GM10248 (cell line): ENCODE measurements at regions of chr2 and their contacts with region 1.

Region 1: GRCh38 chr2:136572335-136572734 is 193.0 kb upstream of the THSD7B start:
- DNase-seq: no peak
- CTCF ChIP-seq: no peak

Region 2: DNA sequence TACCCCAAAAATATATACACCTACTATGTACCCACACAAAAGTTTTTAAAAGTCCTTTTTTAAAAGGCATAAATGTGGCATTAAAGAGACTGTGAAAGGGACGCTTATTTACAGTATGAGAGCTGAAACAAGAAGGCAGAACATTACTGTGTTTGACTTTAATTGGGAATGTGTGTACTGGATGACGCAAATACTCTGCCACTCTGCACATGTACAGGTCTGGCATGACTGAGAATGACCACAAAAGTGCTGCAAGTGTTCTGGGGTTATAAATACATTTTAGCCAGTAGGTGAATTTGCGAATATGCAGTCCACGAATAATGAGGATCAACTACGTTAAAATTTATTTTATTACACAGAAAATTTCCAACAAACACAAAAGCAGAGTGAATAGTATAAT is 598.3 kb before region 1 on chr2:
- CTCF ChIA-PET with region 1: no interaction called
- POLR2A ChIA-PET with region 1: no interaction called
- DNase-seq: no peak
- CTCF ChIP-seq: no peak

Region 3: GRCh38 chr2:136557203-136557602 is 15.1 kb before region 1 on chr2:
- CTCF ChIA-PET with region 1: interaction called, 13 read pairs
- POLR2A ChIA-PET with region 1: no interaction called
- DNase-seq: no peak
- CTCF ChIP-seq: no peak